ENCODE measurements at regions of chr1 and their contacts with region 1.

Region 1: GRCh38 chr1:244864253-244865027 is at the start of gene HNRNPU:
- DNase-seq: peak; percentile 99
- ATAC-seq: peak; percentile 94
- total RNA-seq, gene HNRNPU: 165 TPM

Region 2: DNA sequence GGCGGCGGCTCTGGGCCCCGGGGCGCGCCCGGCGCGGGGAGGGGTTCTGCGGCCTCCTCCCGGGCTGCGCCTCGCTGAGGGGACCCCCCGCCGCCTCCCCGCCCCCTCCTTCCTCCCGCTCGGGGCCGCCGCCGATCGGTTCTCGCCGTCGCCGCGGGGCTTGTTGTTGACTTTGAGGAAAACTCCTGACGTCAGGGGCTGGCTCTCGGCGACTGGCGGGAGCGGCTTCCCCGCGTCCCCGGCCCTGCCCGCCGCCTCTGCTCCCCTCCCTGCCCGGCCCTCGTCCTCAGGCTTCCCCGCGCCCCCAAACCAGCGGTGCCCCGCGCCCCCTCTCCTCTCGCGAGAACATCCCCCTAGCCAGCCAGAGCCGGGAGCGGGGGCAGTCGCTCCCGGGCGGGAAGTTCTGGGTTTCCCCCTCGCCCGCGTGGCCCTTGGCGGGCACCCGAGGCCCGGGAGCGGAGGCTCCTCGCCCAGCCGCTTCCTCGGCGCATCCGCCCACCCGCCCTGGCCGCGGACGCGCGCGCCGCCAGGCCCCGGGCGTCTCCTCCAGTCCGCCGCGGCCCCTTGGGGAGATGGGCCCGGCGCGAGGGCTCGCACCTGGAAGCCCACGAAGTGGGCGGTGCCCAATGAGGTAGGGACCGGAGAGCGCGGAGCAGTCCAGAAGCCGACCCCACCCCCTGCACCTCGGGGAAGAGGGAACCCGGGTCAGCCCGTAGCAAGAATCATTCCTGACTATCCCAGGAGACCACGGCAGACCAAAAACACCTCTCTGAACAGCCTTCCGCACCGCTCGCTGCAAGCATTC is 1013.8 kb before region 1 on chr1:
- intact Hi-C with region 1: no loop called
- DNase-seq: peak; percentile 89
- ATAC-seq: peak; percentile 66

Region 3: DNA sequence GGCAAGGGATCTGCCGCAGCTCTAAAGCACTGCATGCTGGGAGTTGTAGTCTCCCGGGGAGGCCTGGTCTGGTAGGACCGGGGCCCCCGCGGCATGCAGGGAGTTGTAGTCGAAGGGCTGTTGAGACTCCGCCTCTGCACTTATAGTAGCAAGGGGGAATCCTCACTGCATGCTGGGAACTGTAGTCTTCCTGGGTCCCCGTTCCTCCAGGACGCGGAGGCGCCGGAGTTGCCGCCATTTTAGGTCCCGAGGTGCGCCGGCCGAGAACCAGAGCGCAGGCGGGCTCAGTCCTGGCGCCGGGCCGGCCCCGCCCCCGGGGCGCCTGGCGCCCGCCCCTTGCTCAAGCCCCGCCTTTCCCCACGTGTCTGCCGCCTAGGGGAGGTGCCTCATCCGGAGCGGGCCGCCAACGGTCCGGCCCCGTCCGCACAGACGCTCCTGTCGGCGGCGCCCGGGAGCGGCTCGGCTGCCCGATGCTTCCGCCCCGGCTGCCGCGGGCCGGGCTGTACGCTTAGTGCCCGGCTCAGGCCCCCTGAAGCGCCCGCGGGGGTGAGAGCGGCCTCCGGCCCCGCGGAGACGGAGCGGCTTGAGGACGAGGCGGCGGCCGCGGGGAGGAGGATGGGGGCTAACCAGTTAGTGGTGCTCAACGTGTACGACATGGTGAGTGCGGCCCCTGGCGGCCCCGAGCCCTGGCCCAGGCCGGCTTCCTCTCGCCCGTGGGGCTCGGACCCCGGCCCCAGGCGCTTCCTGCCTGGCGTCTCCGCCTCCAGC is 211.6 kb before region 1 on chr1 and contains the start of gene DESI2:
- intact Hi-C with region 1: loop called (anchors 2 kb)
- DNase-seq: peak; percentile 99
- ATAC-seq: peak; percentile 98
- total RNA-seq, gene DESI2: 21.2 TPM

Region 4: GRCh38 chr1:244712669-244713068 is 151.8 kb before region 1 on chr1:
- intact Hi-C with region 1: no loop called
- DNase-seq: no peak
- ATAC-seq: no peak

Region 5: GRCh38 chr1:244792188-244792850 is 72.1 kb before region 1 on chr1:
- intact Hi-C with region 1: no loop called
- DNase-seq: no peak
- ATAC-seq: no peak

Region 6: GRCh38 chr1:244835276-244836134 is 28.9 kb before region 1 on chr1 and contains the start of gene COX20:
- intact Hi-C with region 1: loop called (anchors 1 kb)
- DNase-seq: peak; percentile 96
- ATAC-seq: peak; percentile 92
- total RNA-seq, gene COX20: 58.4 TPM

Region 7: DNA sequence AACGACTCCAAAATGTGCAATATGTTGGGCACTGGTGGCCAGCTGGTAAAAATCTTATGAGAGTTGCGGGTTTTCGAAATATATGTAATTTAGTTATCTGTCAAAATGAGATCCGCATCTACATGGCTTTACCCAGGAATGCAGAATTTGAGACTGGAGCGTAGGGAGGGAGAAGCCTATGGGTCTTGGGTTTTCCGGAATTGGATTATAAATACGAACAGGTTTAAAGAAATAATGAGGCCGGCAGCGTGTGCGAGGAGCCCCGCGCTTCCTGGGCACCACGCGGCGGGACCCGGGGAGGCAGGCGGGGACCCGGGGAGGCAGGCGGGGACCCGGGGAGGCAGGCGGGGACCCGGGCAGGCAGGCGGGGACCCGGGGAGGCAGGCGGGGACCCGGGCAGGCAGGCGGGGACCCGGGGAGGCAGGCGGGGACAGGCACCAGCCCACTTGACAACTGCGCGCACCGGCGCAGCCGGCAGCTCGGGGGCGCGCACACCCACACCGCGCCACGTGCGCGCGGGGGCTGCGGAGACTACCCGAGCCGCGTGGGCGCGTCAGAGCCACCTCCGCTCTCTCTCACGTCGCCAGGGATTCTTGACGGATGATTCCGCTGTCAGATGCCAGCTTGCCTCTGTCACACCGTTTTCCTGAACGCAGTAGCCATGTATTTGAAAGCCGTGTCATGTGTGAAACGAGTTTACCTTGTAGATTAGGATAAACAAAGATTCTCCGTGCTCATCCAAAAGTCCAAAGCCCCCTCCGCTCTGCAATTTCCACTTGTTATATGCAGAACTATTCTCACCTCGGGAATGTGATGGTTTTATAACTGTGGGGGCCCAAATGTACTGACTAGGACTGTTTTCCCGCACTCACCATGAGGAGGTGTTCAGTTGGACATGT is 54.2 kb after region 1 on chr1:
- intact Hi-C with region 1: loop called (anchors 5 kb)
- DNase-seq: no peak
- ATAC-seq: peak; percentile 92

Region 8: GRCh38 chr1:244970661-244971551 is 106.5 kb after region 1 on chr1:
- intact Hi-C with region 1: loop called (anchors 1 kb)
- DNase-seq: peak; percentile 97
- ATAC-seq: peak; percentile 91